ENCODE measurements at regions of chr5 and their contacts with region 1.

Region 1: DNA sequence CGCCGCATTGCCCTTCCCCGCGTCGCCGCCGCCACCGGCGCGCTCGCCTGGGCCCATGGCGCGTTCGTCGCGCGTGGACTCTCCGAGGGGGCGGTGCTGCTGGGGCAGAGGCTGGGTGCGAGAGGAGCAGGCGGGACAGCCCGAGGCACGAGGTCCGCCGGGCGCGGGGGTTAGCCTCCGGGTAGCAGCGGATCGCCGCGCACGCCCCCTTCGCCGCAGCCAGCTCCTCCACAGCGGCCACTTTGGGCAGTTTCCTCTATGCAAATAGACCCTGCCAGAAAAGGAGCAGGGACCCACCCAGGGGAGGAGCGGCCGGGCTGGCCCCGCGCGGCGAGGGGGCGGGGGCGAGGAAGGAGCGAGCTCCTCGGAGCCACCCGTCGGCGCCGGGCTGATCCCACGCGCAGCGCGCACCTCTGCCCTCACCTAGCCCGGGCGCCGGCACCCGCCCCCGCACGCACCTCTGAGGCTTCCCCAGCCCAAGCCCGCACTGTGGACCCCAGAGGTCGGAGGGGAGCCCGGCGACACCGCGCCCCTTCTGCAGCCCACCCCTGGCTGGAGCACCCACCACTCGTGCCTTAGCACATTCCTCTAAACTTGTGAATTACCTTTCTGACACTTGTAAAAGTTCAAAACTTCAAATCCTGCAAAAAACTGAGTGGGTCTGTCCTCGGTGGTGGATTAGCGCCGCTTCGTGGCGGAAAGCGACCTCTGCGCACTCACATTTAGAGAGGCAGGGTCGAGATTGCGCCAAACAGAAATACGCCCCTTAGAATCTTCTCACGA is at the start of gene COL23A1:
- DNase-seq: peak; percentile 86
- ATAC-seq: peak; percentile 87
- total RNA-seq, gene COL23A1: 22.5 TPM

Region 2: GRCh38 chr5:178236679-178237078 is 353.7 kb before region 1 on chr5:
- intact Hi-C with region 1: loop called (anchors 2 kb)
- DNase-seq: no peak
- ATAC-seq: peak; percentile 30

Region 3: DNA sequence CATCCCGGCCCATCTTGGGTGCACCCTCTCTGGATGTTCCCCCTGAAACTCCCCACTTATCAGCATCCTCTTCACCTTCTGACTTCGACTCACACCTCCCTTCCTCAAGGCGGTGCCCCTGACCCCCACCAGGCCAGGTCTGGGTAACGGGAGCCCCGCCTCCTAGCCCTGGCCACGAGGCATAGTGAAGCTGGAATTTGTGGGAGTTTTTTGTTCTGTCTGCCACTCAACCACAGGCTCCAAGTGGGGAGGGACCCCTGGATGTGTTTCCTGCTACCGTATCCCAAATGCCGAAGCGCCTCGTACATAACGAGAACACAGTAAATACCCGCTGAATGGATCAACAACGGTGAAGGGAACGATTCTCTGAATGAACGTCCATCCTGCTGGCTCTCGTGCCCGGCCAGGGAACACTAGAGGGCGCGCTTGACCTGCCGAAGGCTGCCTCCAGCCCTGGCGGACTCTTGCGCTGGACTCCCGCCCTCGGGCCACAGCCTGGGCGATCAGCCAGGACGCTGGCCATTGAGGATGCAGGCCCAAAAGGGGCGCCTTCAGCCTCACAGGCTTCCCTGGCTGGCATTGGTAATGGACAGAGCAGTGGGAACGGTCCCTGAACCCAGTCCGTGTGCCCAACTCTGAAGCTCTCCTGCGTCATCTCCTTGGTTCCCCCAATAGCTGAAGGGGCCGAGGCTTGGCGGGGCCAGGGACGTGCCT is 310.4 kb before region 1 on chr5:
- intact Hi-C with region 1: loop called (anchors 1 kb)
- DNase-seq: peak; percentile 94
- ATAC-seq: peak; percentile 84

Region 4: DNA sequence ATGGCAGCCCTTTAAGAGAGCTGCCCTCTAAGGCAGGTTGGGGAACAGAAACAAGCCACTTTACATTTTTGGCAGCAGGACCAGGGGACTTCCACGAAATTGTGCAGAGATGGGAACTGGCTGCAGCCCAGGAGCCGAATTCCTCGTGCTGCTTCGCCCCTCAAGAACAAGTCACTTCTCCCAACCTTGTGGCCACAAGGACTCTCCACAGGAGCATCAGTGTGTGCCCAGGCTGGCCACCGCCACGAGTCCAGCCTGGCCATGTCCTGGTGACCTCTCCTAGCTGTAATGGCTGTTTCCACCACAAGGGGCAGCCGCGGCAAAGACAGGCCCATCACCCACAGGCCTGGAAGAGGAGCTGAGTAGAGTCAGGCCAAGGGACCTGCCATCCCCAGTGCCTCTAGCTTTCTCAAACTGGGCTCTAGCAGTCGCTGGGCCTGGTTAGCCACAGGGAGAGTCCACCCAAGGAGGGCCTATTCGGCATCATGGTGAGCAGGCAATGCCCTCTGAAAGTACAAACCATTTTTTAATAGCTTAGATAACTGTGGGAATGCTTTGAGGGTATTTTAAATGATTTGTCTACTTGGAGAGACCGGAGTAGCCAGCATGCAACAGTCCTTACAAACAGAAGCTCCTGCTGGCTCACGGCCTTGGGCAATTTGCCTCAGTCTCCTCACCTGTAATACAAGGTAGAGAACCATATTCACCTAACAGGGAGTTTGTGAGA is 129.2 kb before region 1 on chr5:
- intact Hi-C with region 1: loop called (anchors 2 kb)
- DNase-seq: peak; percentile 86
- ATAC-seq: peak; percentile 93

Region 5: DNA sequence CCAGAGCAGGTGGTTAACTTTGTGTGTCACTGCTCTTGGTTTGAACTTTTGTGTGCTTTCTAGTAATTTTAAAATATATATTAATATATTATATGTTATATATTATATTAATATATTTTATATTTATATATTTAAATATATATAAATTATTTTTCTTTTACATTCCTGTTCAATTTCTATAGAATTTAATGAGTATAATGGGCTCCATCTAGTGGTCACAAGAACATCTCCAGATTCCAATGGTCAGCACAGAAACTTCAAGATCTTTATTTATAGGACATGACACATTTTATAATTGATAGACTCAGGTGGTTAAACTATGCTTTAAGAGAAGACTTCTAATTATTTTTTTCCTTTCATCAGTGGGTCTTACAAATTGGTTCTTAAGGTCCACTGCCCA is 39.3 kb before region 1 on chr5:
- intact Hi-C with region 1: loop called (anchors 2 kb)
- DNase-seq: no peak
- ATAC-seq: no peak